ENCODE measurements at regions of chr14 and their contacts with region 1.

Region 1: GRCh38 chr14:74905375-74906142 is 17.5 kb downstream of the RPS6KL1 start:
- DNase-seq: no peak
- H3K4me3 ChIP-seq: no peak overlapping the region
- H3K27me3 ChIP-seq: no peaks in the 10 kb centered on the region
- CTCF ChIP-seq: peak; percentile 93

Region 2: GRCh38 chr14:74846168-74846567 is 59.4 kb before region 1 on chr14:
- CTCF ChIA-PET with region 1: interaction called, 11 read pairs
- POLR2A ChIA-PET with region 1: no interaction called
- DNase-seq: peak; percentile 88
- H3K4me3 ChIP-seq: no peak overlapping the region
- H3K27me3 ChIP-seq: no peaks in the 10 kb centered on the region
- CTCF ChIP-seq: no peak

Region 3: GRCh38 chr14:74881431-74882361 is 23.9 kb before region 1 on chr14 and contains the start of gene DLST:
- CTCF ChIA-PET with region 1: interaction called, 195 read pairs
- POLR2A ChIA-PET with region 1: no interaction called
- DNase-seq: no peak
- H3K4me3 ChIP-seq: peak within 1 kb of the TSS; percentile 61
- H3K27me3 ChIP-seq: no peaks in the 10 kb centered on the region
- CTCF ChIP-seq: no peak
- polyA plus RNA-seq, gene DLST: 125 and 150 TPM in 2 replicates

Region 4: GRCh38 chr14:74893614-74894091 is 11.9 kb before region 1 on chr14:
- CTCF ChIA-PET with region 1: interaction called, 79 read pairs
- POLR2A ChIA-PET with region 1: no interaction called
- DNase-seq: no peak
- H3K4me3 ChIP-seq: no peak overlapping the region
- H3K27me3 ChIP-seq: no peaks in the 10 kb centered on the region
- CTCF ChIP-seq: no peak

Region 5: DNA sequence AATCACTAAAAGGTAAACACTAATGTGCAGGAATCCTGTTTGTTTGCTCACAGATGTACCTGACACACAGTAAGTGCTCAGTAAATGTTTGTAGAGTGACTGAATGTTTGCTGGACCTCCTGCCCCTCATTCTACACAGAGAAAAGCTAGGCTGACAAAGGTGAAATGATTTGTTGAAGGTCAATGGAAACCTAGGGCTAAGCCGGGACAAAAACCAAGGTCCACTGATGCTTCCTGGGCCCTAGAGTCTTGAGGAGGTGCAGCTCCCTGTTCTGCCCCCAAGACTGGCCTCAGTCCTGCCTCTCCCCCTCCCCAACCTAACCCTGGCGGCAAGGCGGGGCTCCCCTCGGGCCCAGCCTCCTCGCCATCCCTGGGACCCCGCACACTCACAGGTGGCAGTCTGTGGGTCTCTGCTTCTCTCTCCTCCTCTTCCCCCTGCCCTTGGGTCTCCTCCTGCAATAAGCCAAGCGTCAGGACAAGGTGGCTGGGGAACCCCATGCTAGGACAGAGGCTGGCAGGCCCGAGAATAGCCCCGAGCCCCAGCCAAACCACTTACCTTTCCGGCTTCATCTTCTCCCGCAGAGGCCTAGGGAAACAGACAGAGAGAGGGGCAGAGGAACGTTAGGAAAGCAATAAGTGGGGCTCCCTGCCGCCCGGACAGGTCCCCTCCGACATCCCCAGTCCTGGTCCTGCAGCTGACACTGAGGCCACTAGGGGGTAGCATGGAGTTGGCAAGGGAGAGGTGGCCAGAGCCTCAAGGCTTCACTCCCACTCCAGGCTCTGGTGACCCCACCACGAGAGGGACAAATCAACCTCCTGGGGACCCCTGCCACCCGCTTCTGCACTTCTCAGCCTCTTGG is 40.5 kb after region 1 on chr14:
- CTCF ChIA-PET with region 1: interaction called, 25 read pairs
- POLR2A ChIA-PET with region 1: no interaction called
- DNase-seq: no peak
- H3K4me3 ChIP-seq: no peak overlapping the region
- H3K27me3 ChIP-seq: no peaks in the 10 kb centered on the region; the same call in 1 of the 2 replicates
- CTCF ChIP-seq: peak; percentile 96

Measured in BJ (cell line).